Activated CD4-positive, alpha-beta memory T cell treated with anti-CD3 and anti-CD28 coated beads, Interleukin-2, amount 10 ng/mL, durations not matched to agents 7 days and 5 days (primary cell): ENCODE measurements at regions of chr9 and their contacts with region 1.

Region 1: DNA sequence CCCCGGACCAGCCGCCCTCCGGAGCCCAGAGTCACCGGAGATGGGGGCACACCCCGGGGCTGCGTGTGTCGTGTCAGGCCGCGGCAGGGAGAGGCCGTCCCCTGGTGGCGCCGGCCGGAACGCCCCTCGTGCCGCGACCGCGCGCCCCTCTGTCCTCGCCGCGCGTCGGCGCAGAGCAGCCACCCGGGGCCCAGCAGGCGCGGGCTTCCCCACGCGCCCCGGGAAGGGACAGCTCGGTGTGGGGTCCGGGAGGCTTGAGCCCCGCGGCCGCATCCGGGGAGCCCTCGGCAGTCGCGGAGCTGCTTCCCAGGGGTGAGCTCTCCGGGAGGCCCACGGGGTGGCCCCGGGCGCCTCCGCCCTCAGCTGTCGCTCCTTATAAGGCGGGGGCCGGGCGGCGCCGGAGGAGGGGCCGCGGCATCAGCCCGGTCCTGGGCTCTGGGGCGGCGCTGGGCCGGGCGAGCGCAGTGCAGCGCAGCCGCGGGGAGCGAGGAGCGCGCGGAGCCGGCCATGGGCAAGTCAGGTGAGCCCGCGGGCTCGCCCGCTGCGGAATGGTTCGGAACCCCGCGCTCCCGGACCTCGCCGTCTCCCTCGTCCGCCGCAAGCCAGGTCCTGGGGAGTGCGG is at the start of gene GLIPR2:
- DNase-seq: peak; percentile 86
- H3K4me3 Mint-ChIP-seq: peak within 1 kb of the TSS; percentile 93
- H3K27ac Mint-ChIP-seq: peak within 1 kb of the TSS; percentile 70
- H3K4me1 Mint-ChIP-seq: peaks cover 52% of the 10 kb centered on the region
- H3K27me3 Mint-ChIP-seq: peaks cover 16% of the 10 kb centered on the region
- total RNA-seq, gene GLIPR2: 45.3 to 48.0 TPM

Region 2: GRCh38 chr9:36148311-36149051 is 12.1 kb after region 1 on chr9:
- CTCF ChIA-PET with region 1: interaction called, 9 read pairs
- POLR2A ChIA-PET with region 1: interaction called, 46 read pairs
- DNase-seq: peak; percentile 84
- H3K4me3 Mint-ChIP-seq: no peak overlapping the region
- H3K27ac Mint-ChIP-seq: peak overlapping the region; percentile 71
- H3K4me1 Mint-ChIP-seq: peaks cover 93% of the 10 kb centered on the region
- H3K27me3 Mint-ChIP-seq: peaks cover 3% of the 10 kb centered on the region